ENCODE measurements at regions of chr2 and their contacts with region 1.

Region 1: DNA sequence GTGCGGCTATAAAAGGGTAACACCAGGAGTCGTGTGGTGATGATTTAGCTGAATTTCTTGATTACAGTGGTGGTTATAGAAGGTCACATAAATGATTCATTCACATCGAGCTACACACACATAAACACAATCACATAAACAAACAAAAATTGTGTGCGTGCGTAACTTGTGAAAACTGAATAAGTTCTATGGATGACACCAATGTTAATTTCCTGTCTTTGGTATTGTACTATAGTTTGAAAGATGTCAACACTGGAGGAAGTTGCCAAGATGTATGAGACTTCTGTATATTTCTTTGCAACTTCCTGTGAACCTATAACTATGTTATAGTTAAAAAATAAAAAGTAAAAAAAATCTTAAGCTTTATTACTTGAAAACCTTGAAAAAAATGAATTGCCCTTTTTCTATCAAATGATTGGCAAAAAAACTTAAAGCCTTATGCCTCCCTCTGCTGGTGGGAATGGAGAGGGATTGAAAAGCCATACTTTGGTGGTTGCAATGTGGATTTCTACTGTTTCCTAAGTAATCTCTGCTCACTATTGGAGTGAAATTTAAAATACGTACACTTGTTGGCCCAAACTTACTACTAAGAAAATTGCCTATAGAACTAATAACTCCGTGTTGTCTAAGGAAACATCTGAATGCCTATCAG is 227.7 kb downstream of the RPIA start:
- DNase-seq: peak; percentile 37
- H3K4me3 Mint-ChIP-seq: no peak overlapping the region
- H3K27ac Mint-ChIP-seq: no peak overlapping the region
- H3K4me1 Mint-ChIP-seq: no peaks in the 10 kb centered on the region
- H3K27me3 Mint-ChIP-seq: peaks cover 66% of the 10 kb centered on the region
- CTCF ChIP-seq: peak; percentile 46

Region 2: DNA sequence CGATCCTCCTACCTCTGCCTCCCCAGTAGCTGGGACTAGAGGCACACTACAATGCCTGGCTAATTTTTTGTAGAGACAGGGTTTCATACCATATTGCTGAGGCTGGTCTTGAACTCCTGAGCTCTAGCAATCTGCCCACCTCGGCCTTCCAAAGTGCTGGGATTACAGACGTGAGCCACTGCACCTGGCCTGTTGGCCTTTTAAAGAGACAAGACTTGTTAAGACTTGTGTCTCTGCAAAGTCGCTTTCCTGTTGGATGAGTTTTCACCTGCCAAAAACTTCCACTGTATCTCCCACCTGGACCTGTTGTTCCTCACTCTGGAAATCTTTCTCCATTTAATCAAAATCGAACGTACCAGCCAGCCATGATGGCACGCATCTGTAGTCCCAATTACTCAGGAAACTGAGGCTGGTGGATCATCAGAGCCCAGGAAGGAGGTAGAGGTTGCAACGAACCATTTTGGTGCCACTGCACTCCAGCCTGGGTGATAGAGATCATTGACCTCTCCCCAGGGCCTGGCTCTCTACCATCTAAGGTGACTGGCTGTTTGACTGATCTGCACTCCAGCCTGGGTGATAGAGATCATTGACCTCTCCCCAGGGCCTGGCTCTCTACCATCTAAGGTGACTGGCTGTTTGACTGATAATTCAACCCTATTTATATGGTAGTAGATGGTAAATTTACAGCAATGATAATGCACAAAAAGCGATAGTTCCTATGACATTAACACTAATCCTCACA is 510.5 kb before region 1 on chr2:
- CTCF ChIA-PET with region 1: no interaction called
- intact Hi-C with region 1: no loop called
- DNase-seq: no peak
- H3K4me3 Mint-ChIP-seq: no peak overlapping the region
- H3K27ac Mint-ChIP-seq: no peak overlapping the region
- H3K4me1 Mint-ChIP-seq: no peaks in the 10 kb centered on the region
- H3K27me3 Mint-ChIP-seq: no peaks in the 10 kb centered on the region
- CTCF ChIP-seq: no peak

Region 3: GRCh38 chr2:88739985-88740600 is 179.1 kb before region 1 on chr2:
- CTCF ChIA-PET with region 1: no interaction called
- intact Hi-C with region 1: loop called (anchors 2 kb)
- DNase-seq: peak; percentile 80
- H3K4me3 Mint-ChIP-seq: no peak overlapping the region
- H3K27ac Mint-ChIP-seq: no peak overlapping the region
- H3K4me1 Mint-ChIP-seq: peaks cover 21% of the 10 kb centered on the region
- H3K27me3 Mint-ChIP-seq: no peaks in the 10 kb centered on the region
- CTCF ChIP-seq: peak; percentile 70

Region 4: GRCh38 chr2:88831792-88832248 is 87.4 kb before region 1 on chr2:
- CTCF ChIA-PET with region 1: no interaction called
- intact Hi-C with region 1: loop called (anchors 2 kb)
- DNase-seq: peak; percentile 77
- H3K4me3 Mint-ChIP-seq: no peak overlapping the region
- H3K27ac Mint-ChIP-seq: no peak overlapping the region
- H3K4me1 Mint-ChIP-seq: no peaks in the 10 kb centered on the region
- H3K27me3 Mint-ChIP-seq: peaks cover 28% of the 10 kb centered on the region
- CTCF ChIP-seq: peak; percentile 75

Region 5: DNA sequence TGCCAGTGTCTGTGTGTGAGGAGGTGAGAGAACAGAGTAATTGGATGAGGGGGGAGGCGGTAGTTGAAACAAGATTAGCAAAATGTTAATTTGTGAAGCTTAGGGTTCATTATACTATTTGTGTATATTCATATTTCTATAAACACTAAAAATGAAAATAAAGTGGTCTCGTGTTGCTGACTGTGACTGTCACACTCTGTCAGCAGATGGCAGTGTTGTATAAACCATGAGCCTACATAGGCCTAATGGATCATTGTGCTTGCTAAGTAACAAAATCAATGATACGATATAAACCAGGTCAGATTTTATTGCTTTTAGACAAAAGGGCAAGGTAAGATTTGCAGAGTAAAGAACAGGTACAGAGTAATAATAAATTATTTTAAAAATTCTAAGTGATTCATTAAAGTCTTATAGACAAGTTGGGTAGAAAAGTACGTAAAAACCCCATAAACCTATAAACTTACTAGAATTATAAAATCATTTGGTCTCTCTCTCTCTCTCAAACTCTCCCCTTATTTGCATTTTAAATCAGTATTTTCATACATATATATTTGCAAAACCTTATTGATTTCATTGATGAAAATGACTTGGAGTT is 45.1 kb before region 1 on chr2:
- CTCF ChIA-PET with region 1: no interaction called
- intact Hi-C with region 1: loop called (anchors 2 kb)
- DNase-seq: peak; percentile 60
- H3K4me3 Mint-ChIP-seq: no peak overlapping the region
- H3K27ac Mint-ChIP-seq: no peak overlapping the region
- H3K4me1 Mint-ChIP-seq: no peaks in the 10 kb centered on the region
- H3K27me3 Mint-ChIP-seq: peaks cover 48% of the 10 kb centered on the region
- CTCF ChIP-seq: no peak

Region 6: DNA sequence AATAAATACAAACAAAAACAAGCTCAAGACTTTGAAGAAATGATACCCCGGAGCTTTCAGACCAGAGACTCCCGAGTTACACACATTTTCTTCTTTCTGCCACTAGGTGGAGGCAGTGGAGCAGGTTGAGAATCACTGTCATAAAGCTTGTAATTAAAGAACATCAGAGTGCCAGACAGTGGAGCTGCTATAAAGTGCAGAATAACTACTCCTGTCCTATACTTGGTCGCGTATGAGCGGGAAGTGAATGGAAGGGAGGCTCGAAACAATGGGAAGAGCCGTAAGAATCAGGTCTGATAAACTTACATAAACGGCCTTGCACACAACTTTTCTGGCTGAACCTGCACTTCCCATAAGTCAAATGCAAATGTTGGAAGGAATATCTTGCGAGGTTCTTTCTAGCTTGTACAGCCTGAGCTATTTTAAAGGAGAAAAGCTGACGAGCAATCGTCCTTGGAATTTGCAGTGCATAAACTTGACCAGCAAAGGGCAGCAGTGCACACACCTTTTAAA is 38.7 kb before region 1 on chr2:
- CTCF ChIA-PET with region 1: no interaction called
- intact Hi-C with region 1: loop called (anchors 1 kb)
- DNase-seq: peak; percentile 61
- H3K4me3 Mint-ChIP-seq: no peak overlapping the region
- H3K27ac Mint-ChIP-seq: no peak overlapping the region
- H3K4me1 Mint-ChIP-seq: no peaks in the 10 kb centered on the region
- H3K27me3 Mint-ChIP-seq: peaks cover 77% of the 10 kb centered on the region
- CTCF ChIP-seq: peak; percentile 58

Measured in Calu3 (cell line).